CD4-positive, alpha-beta T cell (primary cell): ENCODE measurements at regions of chr2 and their contacts with region 1.

Region 1: GRCh38 chr2:207166039-207166348 is 246 bp upstream of the KLF7 start:
- DNase-seq: peak; percentile 89 to 97 (median 95)
- ATAC-seq: peak; percentile 88
- H3K4me3 ChIP-seq: peak overlapping the region; percentile 71
- H3K4me3 Mint-ChIP-seq: peak overlapping the region; percentile 99
- H3K27ac ChIP-seq: peak overlapping the region; percentile 95 to 99
- H3K27ac Mint-ChIP-seq: peak overlapping the region; percentile 97
- H3K4me1 ChIP-seq: peaks cover 37% of the 10 kb centered on the region
- H3K4me1 Mint-ChIP-seq: peaks cover 53% of the 10 kb centered on the region
- H3K27me3 ChIP-seq: no peaks in the 10 kb centered on the region
- H3K27me3 Mint-ChIP-seq: no peaks in the 10 kb centered on the region
- CTCF ChIP-seq: no peak

Region 2: GRCh38 chr2:206085742-206086445 is 1080.1 kb before region 1 on chr2 and contains the start of gene INO80D:
- CTCF ChIA-PET with region 1: no interaction called
- POLR2A ChIA-PET with region 1: interaction called, 3 read pairs
- intact Hi-C with region 1: loop called in 1 of 2 experiments (anchors 10 kb)
- DNase-seq: peak; percentile 62 to 92 (median 72)
- ATAC-seq: peak; percentile 94
- H3K4me3 ChIP-seq: peak within 1 kb of the TSS; percentile 90
- H3K4me3 Mint-ChIP-seq: peak within 1 kb of the TSS; percentile 98
- H3K27ac ChIP-seq: peak within 1 kb of the TSS; percentile 94 to 95
- H3K27ac Mint-ChIP-seq: peak within 1 kb of the TSS; percentile 100
- H3K4me1 ChIP-seq: peaks cover 26% of the 10 kb centered on the region
- H3K4me1 Mint-ChIP-seq: peaks cover 53% of the 10 kb centered on the region
- H3K27me3 ChIP-seq: no peaks in the 10 kb centered on the region
- H3K27me3 Mint-ChIP-seq: no peaks in the 10 kb centered on the region
- CTCF ChIP-seq: peak; percentile 60
- total RNA-seq, gene INO80D: 45.3 to 48.9 TPM

Region 3: GRCh38 chr2:207073801-207074678 is 92.0 kb before region 1 on chr2:
- CTCF ChIA-PET with region 1: no interaction called
- POLR2A ChIA-PET with region 1: interaction called, 25 read pairs
- intact Hi-C with region 1: no loop called
- DNase-seq: peak in 6 of 14 experiments; percentile 2 to 49 (median 28)
- ATAC-seq: peak; percentile 52
- H3K4me3 ChIP-seq: no peak overlapping the region
- H3K4me3 Mint-ChIP-seq: no peak overlapping the region
- H3K27ac ChIP-seq: no peak overlapping the region
- H3K27ac Mint-ChIP-seq: peak overlapping the region; percentile 58
- H3K4me1 ChIP-seq: peaks cover 10% of the 10 kb centered on the region
- H3K4me1 Mint-ChIP-seq: peaks cover 33% of the 10 kb centered on the region
- H3K27me3 ChIP-seq: no peaks in the 10 kb centered on the region
- H3K27me3 Mint-ChIP-seq: no peaks in the 10 kb centered on the region
- CTCF ChIP-seq: no peak

Region 4: DNA sequence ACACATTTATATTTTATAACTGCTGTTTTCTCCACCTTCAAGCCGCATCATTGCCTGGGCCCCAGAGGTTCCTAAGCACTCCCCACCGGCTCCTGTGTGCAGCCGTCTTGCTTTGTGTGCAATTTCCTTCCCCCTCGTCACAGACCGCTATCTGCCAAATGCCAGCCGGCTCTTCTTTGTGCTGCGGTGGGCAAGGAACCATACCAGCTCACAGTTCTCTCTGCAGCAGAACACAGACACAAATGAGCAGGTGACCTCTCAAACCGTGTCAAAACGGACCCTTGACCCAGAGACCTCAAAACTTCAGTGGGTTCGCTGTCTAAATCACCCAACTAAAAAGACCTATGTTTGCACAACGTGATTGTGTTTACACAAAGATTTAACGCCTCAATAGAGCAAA is 58.4 kb before region 1 on chr2:
- CTCF ChIA-PET with region 1: no interaction called
- POLR2A ChIA-PET with region 1: interaction called, 11 read pairs
- intact Hi-C with region 1: no loop called
- DNase-seq: peak in 1 of 14 experiments; percentile 21
- ATAC-seq: peak; percentile 56
- H3K4me3 ChIP-seq: no peak overlapping the region
- H3K4me3 Mint-ChIP-seq: no peak overlapping the region
- H3K27ac ChIP-seq: no peak overlapping the region
- H3K27ac Mint-ChIP-seq: peak overlapping the region; percentile 42
- H3K4me1 ChIP-seq: no peaks in the 10 kb centered on the region
- H3K4me1 Mint-ChIP-seq: peaks cover 67% of the 10 kb centered on the region
- H3K27me3 ChIP-seq: no peaks in the 10 kb centered on the region
- H3K27me3 Mint-ChIP-seq: no peaks in the 10 kb centered on the region
- CTCF ChIP-seq: no peak

Region 5: DNA sequence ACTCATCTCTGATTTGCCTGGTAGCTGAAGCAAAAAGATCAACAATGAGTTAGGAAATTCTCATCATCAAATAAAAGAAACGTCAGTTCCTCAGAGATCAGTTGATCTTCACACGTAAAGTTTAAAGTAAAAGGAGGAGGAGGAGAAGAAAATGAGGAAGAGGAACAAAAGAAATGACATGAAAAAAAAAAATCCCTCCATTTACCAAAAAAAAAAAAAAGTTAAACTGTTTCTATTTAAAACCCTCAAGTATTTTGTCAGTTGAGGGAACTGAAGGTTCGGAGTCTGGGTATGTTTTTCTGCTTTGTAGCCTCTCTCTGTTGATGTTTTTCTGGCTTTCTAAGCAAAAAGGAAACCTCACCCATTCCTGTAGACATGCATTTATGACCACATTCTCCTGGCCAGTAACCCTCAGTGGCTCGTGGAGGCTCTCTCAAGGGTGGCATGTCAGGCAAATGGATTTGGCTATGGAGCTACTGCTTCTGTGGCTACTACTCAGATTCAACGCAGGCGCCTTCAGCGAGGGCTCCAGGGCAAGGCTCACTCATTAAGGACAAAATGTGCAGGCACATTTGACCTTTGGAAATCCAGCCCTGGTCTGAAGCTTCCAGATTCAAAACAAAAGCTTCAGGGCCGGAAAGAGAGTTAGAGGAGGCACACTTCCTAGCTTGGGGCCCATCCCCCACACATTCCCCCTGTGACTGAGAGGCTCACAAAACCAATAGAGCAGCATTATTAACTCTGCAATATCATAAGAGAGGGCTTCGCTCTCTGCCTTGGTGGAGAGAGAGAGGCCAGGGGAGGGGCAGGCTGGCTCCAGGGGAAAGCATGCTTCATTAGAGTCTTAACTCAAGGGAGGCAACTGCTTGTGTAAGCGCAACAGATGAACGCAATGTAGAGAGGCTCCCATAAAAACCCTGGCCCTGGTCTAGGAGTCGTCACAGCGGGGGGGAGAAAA is 22.5 kb before region 1 on chr2:
- CTCF ChIA-PET with region 1: interaction called, 44 read pairs
- POLR2A ChIA-PET with region 1: interaction called, 463 read pairs
- intact Hi-C with region 1: loop called (anchors 1 to 2 kb)
- DNase-seq: peak; percentile 35 to 80 (median 60)
- ATAC-seq: peak; percentile 74
- H3K4me3 ChIP-seq: peak overlapping the region; percentile 52
- H3K4me3 Mint-ChIP-seq: peak overlapping the region; percentile 49
- H3K27ac ChIP-seq: peak overlapping the region; percentile 89 to 91
- H3K27ac Mint-ChIP-seq: peak overlapping the region; percentile 89
- H3K4me1 ChIP-seq: peaks cover 43% of the 10 kb centered on the region
- H3K4me1 Mint-ChIP-seq: peaks cover 69% of the 10 kb centered on the region
- H3K27me3 ChIP-seq: no peaks in the 10 kb centered on the region
- H3K27me3 Mint-ChIP-seq: no peaks in the 10 kb centered on the region
- CTCF ChIP-seq: no peak

Region 6: GRCh38 chr2:207625018-207625907 is 459.3 kb after region 1 on chr2 and contains the start of gene METTL21A:
- CTCF ChIA-PET with region 1: no interaction called
- POLR2A ChIA-PET with region 1: interaction called, 31 read pairs
- intact Hi-C with region 1: loop called (anchors 2 to 5 kb)
- DNase-seq: peak; percentile 89 to 99 (median 92)
- ATAC-seq: peak; percentile 77
- H3K4me3 ChIP-seq: peak within 1 kb of the TSS; percentile 99
- H3K4me3 Mint-ChIP-seq: peak within 1 kb of the TSS; percentile 98
- H3K27ac ChIP-seq: peak within 1 kb of the TSS; percentile 97 to 98
- H3K27ac Mint-ChIP-seq: peak within 1 kb of the TSS; percentile 96
- H3K4me1 ChIP-seq: peaks cover 46% of the 10 kb centered on the region
- H3K4me1 Mint-ChIP-seq: peaks cover 51% of the 10 kb centered on the region
- H3K27me3 ChIP-seq: no peaks in the 10 kb centered on the region
- H3K27me3 Mint-ChIP-seq: no peaks in the 10 kb centered on the region
- CTCF ChIP-seq: peak; percentile 68
- total RNA-seq, gene METTL21A: 10.8 to 11.9 TPM